Prostate gland (tissue), 2 donors: ENCODE measurements at regions of chr10 and their contacts with region 1.

Region 1: DNA sequence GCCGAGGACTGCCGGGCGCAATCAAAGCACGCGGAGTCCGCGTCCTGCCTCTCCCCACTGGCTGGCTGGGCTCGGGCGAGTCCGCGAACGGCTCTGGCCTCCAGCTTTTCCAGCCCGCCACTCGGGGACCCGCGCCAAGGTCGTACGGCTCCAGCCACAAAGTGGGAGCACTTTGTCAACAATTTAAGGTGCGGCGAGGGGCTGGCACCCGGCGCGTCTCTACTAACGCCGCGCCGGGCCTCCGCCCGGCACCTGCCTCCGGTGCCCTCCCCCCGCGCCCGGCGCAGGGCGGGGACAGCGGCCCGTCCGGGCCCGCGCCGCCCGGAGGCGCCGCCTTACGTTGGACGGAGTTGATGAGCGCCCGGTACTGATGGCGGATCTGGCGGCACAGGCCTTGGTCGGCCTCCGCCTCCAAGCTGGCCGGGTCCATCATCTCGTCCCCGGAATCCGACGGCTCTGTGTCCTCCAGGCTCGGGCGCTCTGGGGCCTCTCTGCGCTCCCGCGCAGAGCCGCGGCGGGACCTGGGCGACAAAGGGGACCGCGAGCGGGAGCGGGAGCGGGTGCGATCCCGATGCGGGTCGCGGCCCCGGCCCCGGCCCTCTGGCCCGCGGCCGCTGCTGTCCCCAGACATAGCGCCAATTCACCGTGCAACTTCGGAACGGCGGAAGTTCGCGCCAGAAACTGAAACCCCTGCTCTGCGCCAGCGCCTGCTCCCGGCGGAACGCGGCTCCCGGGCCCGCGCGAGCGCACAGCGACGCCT is at the start of gene NSMCE4A:
- DNase-seq: peak; percentile 70
- H3K4me3 ChIP-seq: peak within 1 kb of the TSS; percentile 78 to 94
- H3K27ac ChIP-seq: peak within 1 kb of the TSS; percentile 99
- H3K4me1 ChIP-seq: no peaks in the 10 kb centered on the region
- H3K27me3 ChIP-seq: no peaks in the 10 kb centered on the region
- CTCF ChIP-seq: peak in 3 of 4 experiments; percentile 56 to 81 (median 78)
- POLR2A ChIP-seq: peak; percentile 43
- total RNA-seq, gene NSMCE4A: 90.1 to 105 TPM

Region 2: DNA sequence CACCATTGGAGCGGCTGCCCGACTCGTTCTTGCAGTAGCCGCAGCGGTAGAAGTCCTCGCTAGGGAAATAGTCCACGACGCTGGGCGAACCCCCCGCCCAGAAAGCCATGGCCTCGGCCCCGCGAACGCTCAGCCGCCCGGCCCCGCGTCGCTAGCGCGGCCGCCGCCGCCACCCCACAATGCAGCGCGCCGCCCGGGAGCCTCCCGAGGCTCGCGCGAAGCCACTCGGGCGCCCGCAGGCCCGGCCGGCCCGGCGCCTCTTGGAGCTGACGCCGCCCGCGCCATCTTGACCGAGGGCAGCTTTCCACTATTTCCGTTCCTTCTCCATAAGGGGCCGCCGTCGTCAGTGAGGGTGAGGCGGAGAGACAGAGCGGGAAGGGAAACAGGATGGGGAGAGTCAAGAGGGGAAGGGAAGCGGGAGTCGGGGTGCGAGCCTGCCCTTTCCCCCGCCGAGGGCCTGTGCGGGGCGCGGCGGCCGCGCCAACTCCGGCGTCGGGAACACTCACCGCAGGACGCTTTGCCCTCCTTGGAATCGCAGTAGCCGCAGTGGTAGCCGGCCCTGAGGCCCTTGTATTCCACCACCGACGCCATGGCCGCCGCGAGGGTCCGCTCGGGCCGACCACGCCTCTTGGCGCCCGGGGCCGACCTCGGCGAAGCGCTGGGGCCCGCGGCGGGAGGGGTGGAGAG is 46.7 kb before region 1 on chr10 and contains the start of gene ATE1:
- intact Hi-C with region 1: loop called (anchors 5 kb)
- DNase-seq: peak; percentile 89
- H3K4me3 ChIP-seq: peak within 1 kb of the TSS; percentile 97 to 98
- H3K27ac ChIP-seq: peak within 1 kb of the TSS; percentile 99 to 100
- H3K4me1 ChIP-seq: peaks cover 4% of the 10 kb centered on the region
- H3K27me3 ChIP-seq: no peaks in the 10 kb centered on the region
- CTCF ChIP-seq: peak in 2 of 4 experiments; percentile 27 to 29
- POLR2A ChIP-seq: peak; percentile 83
- total RNA-seq, gene ATE1: 29.9 to 36.2 TPM